ENCODE measurements at regions of chr3 and their contacts with region 1.

Region 1: DNA sequence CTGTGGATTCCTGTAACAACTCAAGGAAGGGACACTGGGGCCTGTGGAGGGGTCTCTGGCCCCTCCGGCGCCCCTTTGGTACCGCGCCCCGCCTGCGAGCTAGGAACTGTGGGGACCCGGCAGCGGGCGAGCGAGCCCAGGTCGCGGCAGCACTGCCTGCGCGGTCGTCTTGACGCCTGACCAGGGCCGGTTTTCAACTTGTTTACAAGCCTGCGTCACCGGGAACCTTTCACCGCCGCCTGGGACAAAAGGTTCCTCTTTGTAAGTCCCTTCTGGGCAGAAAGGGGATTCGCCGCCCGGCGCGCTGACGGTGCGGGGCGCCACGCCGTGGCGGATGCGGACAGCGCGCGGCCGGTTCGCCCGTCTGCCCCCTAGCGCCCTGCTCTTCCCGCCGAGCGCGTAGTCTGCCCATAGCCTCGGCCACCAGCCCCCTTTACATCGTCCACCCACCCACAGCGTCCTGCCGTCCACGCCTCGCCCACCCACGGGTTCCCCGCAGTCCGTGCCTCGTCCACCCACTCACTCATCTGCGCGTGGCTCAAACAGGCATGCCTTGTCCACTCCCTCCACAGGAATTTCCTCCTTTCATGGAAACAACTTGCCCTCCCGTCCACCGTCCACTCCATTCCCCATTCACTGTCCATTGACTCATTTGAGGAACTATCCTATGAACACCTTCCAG is 5.5 kb upstream of the CFAP100 start:
- DNase-seq: peak in 7 of 9 donors; percentile 11 to 49 (median 15)
- ATAC-seq: peak; percentile 90
- H3K4me3 ChIP-seq: no peak overlapping the region
- H3K4me3 Mint-ChIP-seq: peak overlapping the region in 7 of 10 donors; percentile 16 to 73 (median 38)
- H3K27ac ChIP-seq: no peak overlapping the region
- H3K27ac Mint-ChIP-seq: no peak overlapping the region
- H3K4me1 ChIP-seq: no peaks in the 10 kb centered on the region
- H3K4me1 Mint-ChIP-seq: peaks cover 0 to 9% (median 5%) of the 10 kb centered on the region in 7 donors
- H3K27me3 ChIP-seq: no peaks in the 10 kb centered on the region
- H3K27me3 Mint-ChIP-seq: peaks cover 57 to 80% (median 73%) of the 10 kb centered on the region in 5 donors

Region 2: GRCh38 chr3:125967138-125967537 is 422.1 kb before region 1 on chr3:
- CTCF ChIA-PET with region 1: no interaction called
- POLR2A ChIA-PET with region 1: no interaction called
- intact Hi-C with region 1: loop called in 1 of 2 experiments (anchors 5 kb)
- DNase-seq: no peak
- ATAC-seq: no peak
- H3K4me3 ChIP-seq: no peak overlapping the region
- H3K4me3 Mint-ChIP-seq: no peak overlapping the region
- H3K27ac ChIP-seq: no peak overlapping the region
- H3K27ac Mint-ChIP-seq: no peak overlapping the region
- H3K4me1 ChIP-seq: peaks cover 2 to 5% of the 10 kb centered on the region in 2 donors
- H3K4me1 Mint-ChIP-seq: peaks cover 0 to 4% (median 4%) of the 10 kb centered on the region in 7 donors
- H3K27me3 ChIP-seq: peaks cover 3 to 6% of the 10 kb centered on the region in 2 donors
- H3K27me3 Mint-ChIP-seq: peaks cover 16 to 24% (median 22%) of the 10 kb centered on the region in 5 donors

Region 3: GRCh38 chr3:126134219-126134975 is 254.9 kb before region 1 on chr3:
- CTCF ChIA-PET with region 1: no interaction called
- POLR2A ChIA-PET with region 1: no interaction called
- intact Hi-C with region 1: loop called in 1 of 2 experiments (anchors 2 kb)
- DNase-seq: peak in 8 of 9 donors; percentile 15 to 42 (median 35)
- ATAC-seq: peak; percentile 63
- H3K4me3 ChIP-seq: no peak overlapping the region
- H3K4me3 Mint-ChIP-seq: no peak overlapping the region
- H3K27ac ChIP-seq: no peak overlapping the region
- H3K27ac Mint-ChIP-seq: no peak overlapping the region
- H3K4me1 ChIP-seq: no peaks in the 10 kb centered on the region
- H3K4me1 Mint-ChIP-seq: peaks cover 0 to 4% (median 0%) of the 10 kb centered on the region in 7 donors
- H3K27me3 ChIP-seq: no peaks in the 10 kb centered on the region
- H3K27me3 Mint-ChIP-seq: peaks cover 9 to 49% (median 30%) of the 10 kb centered on the region in 5 donors

Region 4: DNA sequence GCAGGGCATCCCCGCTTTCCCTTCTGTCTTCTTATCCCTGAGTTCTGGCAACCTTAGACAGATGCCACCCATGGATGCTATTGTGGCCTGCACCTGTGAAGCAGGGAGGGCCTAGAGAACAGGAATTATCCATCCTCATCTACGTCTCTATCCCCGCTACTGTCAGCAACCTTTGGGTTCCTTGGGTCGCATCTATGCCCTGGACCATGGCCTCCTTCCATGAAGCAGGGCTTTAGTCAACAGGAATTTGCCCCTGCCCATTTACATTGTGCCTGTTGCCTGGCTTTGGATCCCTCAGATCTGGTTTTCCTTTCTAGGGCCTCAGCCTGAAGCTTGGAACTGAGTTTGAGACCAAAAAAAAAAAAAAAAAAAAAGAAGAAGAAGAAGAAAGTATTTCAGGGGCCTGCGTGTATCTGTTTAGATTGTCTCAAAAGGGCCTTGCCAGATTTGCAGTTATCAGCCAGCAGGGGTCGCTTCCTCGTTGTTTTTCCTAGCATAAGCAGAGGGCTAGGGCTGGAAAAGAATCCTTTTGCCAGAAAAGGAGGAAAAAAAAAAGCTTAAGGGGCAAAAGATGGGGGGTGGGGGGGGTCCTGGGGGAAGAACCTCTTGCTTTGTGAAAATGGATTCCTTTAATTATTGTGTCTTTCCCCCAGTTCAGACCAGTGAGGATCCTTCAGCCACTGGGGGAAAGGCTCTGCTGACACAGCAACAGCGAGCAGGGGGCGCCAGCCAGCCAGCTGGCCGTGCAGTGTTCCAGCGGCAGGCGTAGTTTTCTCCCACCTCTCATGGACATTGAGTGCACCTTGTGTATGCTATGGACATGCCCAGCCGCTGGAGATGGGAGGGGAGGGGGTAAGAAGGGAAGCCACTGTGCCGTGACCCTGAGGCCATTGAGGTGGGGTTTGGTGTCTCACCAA is 143.2 kb before region 1 on chr3:
- CTCF ChIA-PET with region 1: interaction called, 3 read pairs
- POLR2A ChIA-PET with region 1: no interaction called
- intact Hi-C with region 1: loop called in 1 of 2 experiments (anchors 1 kb)
- DNase-seq: no peak
- ATAC-seq: no peak
- H3K4me3 ChIP-seq: no peak overlapping the region
- H3K4me3 Mint-ChIP-seq: no peak overlapping the region
- H3K27ac ChIP-seq: no peak overlapping the region
- H3K27ac Mint-ChIP-seq: no peak overlapping the region
- H3K4me1 ChIP-seq: no peaks in the 10 kb centered on the region
- H3K4me1 Mint-ChIP-seq: no peaks in the 10 kb centered on the region
- H3K27me3 ChIP-seq: no peaks in the 10 kb centered on the region
- H3K27me3 Mint-ChIP-seq: peaks cover 3 to 33% (median 17%) of the 10 kb centered on the region in 5 donors

Region 5: DNA sequence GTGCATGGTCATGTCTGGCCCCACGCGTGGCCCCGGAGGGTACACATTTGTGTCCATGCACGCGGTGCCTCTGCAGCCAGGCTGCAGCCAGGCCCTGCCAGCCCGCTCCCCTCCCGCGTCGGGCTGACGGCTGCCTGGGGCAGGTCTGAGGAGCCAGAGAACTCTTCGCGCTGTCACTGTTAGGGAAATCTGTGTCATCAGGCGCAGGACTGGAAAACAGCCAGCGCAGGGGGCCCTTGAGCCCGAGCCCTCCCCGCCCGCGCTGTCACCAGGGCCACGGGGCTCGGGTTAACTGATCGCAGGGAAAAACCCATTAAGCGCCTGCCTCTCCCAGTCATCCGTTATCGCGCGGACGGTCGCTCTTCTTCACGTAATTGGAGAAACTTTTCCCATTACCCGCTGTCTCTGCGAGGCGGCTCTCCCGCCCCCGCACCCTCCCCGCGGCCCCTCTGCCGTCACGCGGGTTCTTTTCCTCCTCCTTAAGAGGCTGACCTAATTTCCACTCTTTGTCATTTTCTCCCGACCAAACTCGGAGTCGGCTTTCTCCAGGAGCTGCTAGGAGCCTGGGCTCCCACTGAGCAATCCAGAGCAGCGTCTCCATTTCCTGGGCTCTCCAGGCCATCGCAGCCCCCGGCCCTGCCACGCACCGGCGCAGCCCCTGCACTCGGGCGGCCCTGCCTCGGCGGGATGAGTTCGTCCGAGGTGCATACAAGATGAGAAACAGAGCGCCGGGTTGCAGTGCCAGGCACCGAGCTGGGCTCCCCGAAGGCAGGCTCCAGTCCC is 746.2 kb after region 1 on chr3:
- CTCF ChIA-PET with region 1: no interaction called
- POLR2A ChIA-PET with region 1: no interaction called
- intact Hi-C with region 1: no loop called
- DNase-seq: no peak
- ATAC-seq: no peak
- H3K4me3 ChIP-seq: no peak overlapping the region
- H3K4me3 Mint-ChIP-seq: peak overlapping the region in 2 of 10 donors; percentile 10 to 56
- H3K27ac ChIP-seq: no peak overlapping the region
- H3K27ac Mint-ChIP-seq: no peak overlapping the region
- H3K4me1 ChIP-seq: no peaks in the 10 kb centered on the region
- H3K4me1 Mint-ChIP-seq: peaks cover 0 to 4% (median 0%) of the 10 kb centered on the region in 7 donors
- H3K27me3 ChIP-seq: no peaks in the 10 kb centered on the region
- H3K27me3 Mint-ChIP-seq: peaks cover 36 to 61% (median 43%) of the 10 kb centered on the region in 5 donors

Measured in naive thymus-derived CD4-positive, alpha-beta T cell (primary cell).